Activated T-helper 1 cell treated with anti-CD3 and anti-CD28 coated beads, Interleukin-12 subunit alpha, Interleukin-12 subunit beta, Interleukin-2, Interleukin-4 antibody, amounts not matched to agents 30 ng/mL and 10 ng/mL and 1 ng/mL, durations not matched to agents 14 hours and 24 hours and 36 hours (primary cell): ENCODE measurements at regions of chr1 and their contacts with region 1.

Region 1: DNA sequence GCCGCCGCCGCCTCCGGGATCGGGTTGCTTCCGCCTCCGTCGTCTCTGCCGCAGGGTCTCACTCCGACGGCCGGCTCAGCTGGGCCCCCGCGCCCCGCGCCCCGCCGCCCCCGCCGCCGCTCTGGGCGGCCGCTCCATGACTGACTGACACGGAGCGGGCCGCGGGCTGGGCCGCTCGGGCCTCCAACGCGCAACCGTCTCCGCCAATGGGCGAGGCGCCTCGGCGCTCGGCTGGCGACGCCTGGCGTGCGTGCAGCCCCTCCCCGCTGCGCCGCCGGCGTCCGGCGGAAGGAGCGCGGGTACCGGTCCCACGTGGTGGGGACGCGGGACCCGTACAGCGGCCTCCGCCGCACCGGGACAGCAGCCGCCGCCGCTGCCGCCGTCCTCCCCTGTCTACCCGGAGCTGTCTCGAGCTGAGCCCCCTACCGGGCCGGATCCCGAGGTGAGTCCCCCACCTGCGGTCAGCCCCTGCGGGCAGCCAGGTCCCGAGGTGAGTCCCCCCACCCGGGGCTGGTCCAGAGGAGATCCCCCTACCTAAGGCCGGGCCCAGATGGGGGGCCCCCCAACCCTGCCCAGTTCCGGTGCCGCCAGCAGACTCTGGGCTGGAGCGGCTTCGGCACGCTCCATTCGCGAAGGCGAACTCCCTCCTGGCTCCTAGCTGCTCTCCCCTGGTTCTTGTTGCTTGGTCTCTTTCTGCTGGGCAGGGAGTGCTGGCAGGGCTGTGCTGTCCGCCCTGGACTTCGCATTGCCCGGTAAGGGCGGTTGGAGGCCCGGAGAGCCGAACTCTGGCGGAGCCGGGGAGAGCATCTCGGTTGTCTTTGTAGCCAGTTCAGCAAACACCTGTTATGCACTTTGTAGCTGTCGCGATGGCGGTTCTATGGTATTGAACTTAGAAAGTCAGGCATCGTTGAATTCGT is at the starts of genes TAF5L and URB2:
- DNase-seq: peak; percentile 87
- H3K4me3 Mint-ChIP-seq: peak within 1 kb of the TSS; percentile 97
- H3K27ac Mint-ChIP-seq: peak within 1 kb of the TSS; percentile 95
- H3K4me1 Mint-ChIP-seq: peaks cover 59% of the 10 kb centered on the region
- H3K27me3 Mint-ChIP-seq: no peaks in the 10 kb centered on the region
- total RNA-seq, gene TAF5L: 35.8 and 37.9 TPM in 2 replicates
- total RNA-seq, gene URB2: 37.3 and 38.4 TPM in 2 replicates

Region 2: GRCh38 chr1:229258031-229258756 is 368.0 kb before region 1 on chr1:
- intact Hi-C with region 1: loop called (anchors 10 kb)
- DNase-seq: peak; percentile 23
- H3K4me3 Mint-ChIP-seq: no peak overlapping the region
- H3K27ac Mint-ChIP-seq: no peak overlapping the region
- H3K4me1 Mint-ChIP-seq: peaks cover 29% of the 10 kb centered on the region
- H3K27me3 Mint-ChIP-seq: peaks cover 11% of the 10 kb centered on the region

Region 3: DNA sequence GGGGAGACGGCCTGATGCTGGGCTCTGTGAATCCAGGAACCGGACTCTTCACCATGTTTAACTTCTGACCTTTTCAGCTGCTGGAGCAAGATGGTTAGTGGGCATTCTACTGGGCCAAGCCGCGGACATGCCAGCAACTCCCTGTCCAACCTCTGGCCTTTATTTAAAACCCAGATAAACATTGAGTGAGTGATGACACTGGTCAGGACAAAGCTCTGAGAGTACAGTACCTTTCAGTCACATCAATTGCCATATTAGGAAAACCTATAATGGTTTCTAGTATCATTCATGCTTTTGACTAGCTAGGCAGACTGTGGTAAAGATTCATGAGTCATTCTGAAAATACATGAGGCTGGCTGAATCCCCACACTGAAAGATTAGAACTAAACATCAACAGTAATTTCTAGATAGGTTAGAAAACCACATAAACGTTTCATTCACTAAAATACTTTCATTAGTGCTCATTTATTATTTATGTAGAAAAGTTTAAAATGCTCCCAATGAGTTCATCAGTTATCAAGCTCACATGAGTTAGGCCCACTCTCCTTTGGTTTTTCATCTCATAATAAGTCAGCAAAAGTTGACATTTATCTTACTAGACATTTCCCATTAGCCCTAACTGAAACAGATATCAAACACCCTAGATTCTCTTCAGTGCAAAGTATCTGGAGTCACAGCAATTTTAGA is 185.2 kb before region 1 on chr1:
- intact Hi-C with region 1: loop called (anchors 2 kb)
- DNase-seq: peak; percentile 17
- H3K4me3 Mint-ChIP-seq: peak overlapping the region; percentile 57
- H3K27ac Mint-ChIP-seq: peak overlapping the region; percentile 76
- H3K4me1 Mint-ChIP-seq: peaks cover 22% of the 10 kb centered on the region
- H3K27me3 Mint-ChIP-seq: peaks cover 36% of the 10 kb centered on the region

Region 4: GRCh38 chr1:229558571-229559335 is 67.4 kb before region 1 on chr1 and contains the start of gene ABCB10:
- intact Hi-C with region 1: loop called (anchors 1 kb)
- DNase-seq: peak; percentile 81
- H3K4me3 Mint-ChIP-seq: peak within 1 kb of the TSS; percentile 90
- H3K27ac Mint-ChIP-seq: peak within 1 kb of the TSS; percentile 83
- H3K4me1 Mint-ChIP-seq: peaks cover 49% of the 10 kb centered on the region
- H3K27me3 Mint-ChIP-seq: no peaks in the 10 kb centered on the region
- total RNA-seq, gene ABCB10: 46.2 and 47.0 TPM in 2 replicates

Region 5: DNA sequence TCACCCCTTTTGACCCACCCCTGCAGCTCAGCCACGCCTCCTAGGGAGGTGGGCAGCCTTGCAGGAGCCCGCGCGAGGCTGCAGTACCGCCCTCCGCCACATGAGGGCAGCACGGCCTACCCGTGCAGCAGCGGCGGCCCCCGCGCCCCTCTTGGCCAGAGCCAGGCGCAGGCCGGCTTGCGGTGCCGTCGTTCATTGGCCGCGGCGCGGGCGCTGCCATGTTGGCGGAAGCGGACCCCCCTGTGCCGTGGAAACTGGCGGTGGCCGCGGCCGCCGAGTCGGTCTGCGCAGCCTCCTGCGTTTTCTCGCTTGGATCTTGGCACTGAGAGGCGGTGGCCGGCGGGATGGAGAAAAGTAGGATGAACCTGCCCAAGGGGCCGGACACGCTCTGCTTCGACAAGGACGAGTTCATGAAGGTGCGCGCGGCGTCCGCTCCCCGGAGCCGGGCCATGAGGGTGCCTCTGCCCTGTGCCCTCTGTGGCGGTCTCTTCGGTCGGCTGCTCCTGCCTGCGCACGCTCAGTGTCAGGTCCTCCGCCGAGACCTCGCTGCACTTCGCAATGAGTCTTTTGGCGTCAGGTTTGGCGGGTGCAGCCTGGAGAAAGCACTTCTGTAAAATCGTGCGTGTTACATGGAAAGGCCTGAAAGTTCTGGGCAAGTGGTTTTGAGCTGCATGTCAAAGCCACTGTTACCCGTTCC is 1016.2 kb after region 1 on chr1 and contains the start of gene COG2:
- intact Hi-C with region 1: loop called (anchors 1 kb)
- DNase-seq: peak; percentile 93
- H3K4me3 Mint-ChIP-seq: peak within 1 kb of the TSS; percentile 96
- H3K27ac Mint-ChIP-seq: peak within 1 kb of the TSS; percentile 95
- H3K4me1 Mint-ChIP-seq: peaks cover 35% of the 10 kb centered on the region
- H3K27me3 Mint-ChIP-seq: peaks cover 12% of the 10 kb centered on the region
- total RNA-seq, gene COG2: 46.3 and 46.4 TPM in 2 replicates

Region 6: GRCh38 chr1:231337472-231338269 is 1711.5 kb after region 1 on chr1 and contains the start of gene EXOC8:
- intact Hi-C with region 1: loop called (anchors 5 kb)
- DNase-seq: peak; percentile 99
- H3K4me3 Mint-ChIP-seq: peak within 1 kb of the TSS; percentile 98
- H3K27ac Mint-ChIP-seq: peak within 1 kb of the TSS; percentile 100
- H3K4me1 Mint-ChIP-seq: peaks cover 62% of the 10 kb centered on the region
- H3K27me3 Mint-ChIP-seq: peaks cover 3% of the 10 kb centered on the region
- total RNA-seq, gene EXOC8: 14.4 and 15.6 TPM in 2 replicates